CD4-positive, alpha-beta memory T cell (primary cell): ENCODE measurements at regions of chr17 and their contacts with region 1.

Region 1: DNA sequence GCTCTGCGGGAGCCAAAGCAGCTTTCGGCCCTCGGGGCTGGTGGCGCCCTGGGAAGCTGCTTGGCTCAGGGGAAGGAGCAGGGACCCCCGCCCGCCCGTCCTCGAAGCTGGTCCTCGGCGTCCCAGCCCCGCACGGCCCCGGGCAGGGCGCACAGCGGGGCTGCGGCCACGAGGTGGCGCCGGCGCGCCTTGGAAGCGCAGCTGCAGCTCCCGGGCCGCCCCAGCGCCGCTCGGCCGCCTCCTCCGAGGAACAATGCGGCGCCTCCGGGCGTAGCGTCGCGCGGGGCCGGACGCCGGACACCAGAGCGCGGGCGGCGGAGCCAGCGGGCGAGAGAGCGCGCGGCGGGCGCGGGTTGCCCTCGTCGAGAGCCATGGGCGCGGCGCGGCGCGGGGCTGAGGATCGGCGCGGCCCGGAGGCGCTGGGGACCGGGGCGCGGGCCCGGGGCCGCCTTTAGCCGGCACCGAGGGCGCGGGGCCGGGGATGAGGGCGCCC is at the start of gene MGAT5B:
- DNase-seq: peak; percentile 52 to 83 (median 74)
- H3K4me3 ChIP-seq: peak within 1 kb of the TSS in 1 of 2 donors; percentile 1
- H3K4me3 Mint-ChIP-seq: peak within 1 kb of the TSS; percentile 53 to 85 (median 74)
- H3K27ac ChIP-seq: no peak within 1 kb of the TSS
- H3K27ac Mint-ChIP-seq: peak within 1 kb of the TSS in 2 of 7 donors; percentile 13 to 87
- H3K4me1 ChIP-seq: peaks cover 11% of the 10 kb centered on the region
- H3K4me1 Mint-ChIP-seq: peaks cover 0 to 12% (median 6%) of the 10 kb centered on the region in 4 donors
- H3K27me3 ChIP-seq: peaks cover 5% of the 10 kb centered on the region
- H3K27me3 Mint-ChIP-seq: peaks cover 6 to 23% of the 10 kb centered on the region in 2 donors
- total RNA-seq, gene MGAT5B: 1.8 to 2.4 TPM

Region 2: GRCh38 chr17:76843703-76844484 is 24.3 kb before region 1 on chr17:
- CTCF ChIA-PET with region 1: no interaction called
- POLR2A ChIA-PET with region 1: no interaction called
- intact Hi-C with region 1: no loop called
- DNase-seq: no peak
- H3K4me3 ChIP-seq: no peak overlapping the region
- H3K4me3 Mint-ChIP-seq: no peak overlapping the region
- H3K27ac ChIP-seq: no peak overlapping the region
- H3K27ac Mint-ChIP-seq: no peak overlapping the region
- H3K4me1 ChIP-seq: peaks cover 26% of the 10 kb centered on the region
- H3K4me1 Mint-ChIP-seq: peaks cover 10 to 19% (median 13%) of the 10 kb centered on the region in 4 donors
- H3K27me3 ChIP-seq: peaks cover 27% of the 10 kb centered on the region
- H3K27me3 Mint-ChIP-seq: peaks cover 31 to 47% of the 10 kb centered on the region in 2 donors

Region 3: DNA sequence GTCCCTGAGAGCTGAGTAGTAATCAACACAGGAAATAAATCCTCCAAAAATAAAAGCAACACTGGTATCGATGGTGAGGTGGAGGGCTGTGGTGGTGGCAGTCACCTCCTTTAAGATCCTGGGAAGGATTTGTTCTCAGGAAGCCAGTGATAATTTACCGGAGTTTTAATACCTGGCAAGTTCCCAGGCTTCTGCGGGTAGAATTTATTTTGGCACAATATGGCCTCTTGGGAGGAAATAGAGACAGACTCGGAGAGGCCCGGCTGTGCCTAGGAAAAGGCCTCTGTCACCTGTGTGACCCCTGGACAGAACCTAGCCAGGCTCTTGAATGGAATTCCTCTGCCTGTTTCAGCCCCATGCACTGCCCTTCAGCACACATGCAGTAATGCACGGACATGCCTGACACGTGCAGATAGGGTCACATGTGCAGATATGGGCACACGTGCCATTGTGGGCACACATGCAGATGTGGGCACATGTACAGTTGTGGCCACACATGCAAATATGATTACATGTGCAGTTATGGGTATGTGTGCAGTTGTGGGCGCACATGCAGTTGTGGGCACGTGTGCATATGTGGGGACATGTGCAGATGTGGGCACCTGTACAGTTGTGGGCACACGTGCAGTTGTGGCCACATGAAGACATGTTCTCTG is 33.4 kb after region 1 on chr17:
- CTCF ChIA-PET with region 1: no interaction called
- POLR2A ChIA-PET with region 1: no interaction called
- intact Hi-C with region 1: no loop called
- DNase-seq: no peak
- H3K4me3 ChIP-seq: no peak overlapping the region
- H3K4me3 Mint-ChIP-seq: no peak overlapping the region
- H3K27ac ChIP-seq: no peak overlapping the region
- H3K27ac Mint-ChIP-seq: no peak overlapping the region
- H3K4me1 ChIP-seq: no peaks in the 10 kb centered on the region
- H3K4me1 Mint-ChIP-seq: no peaks in the 10 kb centered on the region
- H3K27me3 ChIP-seq: no peaks in the 10 kb centered on the region
- H3K27me3 Mint-ChIP-seq: no peaks in the 10 kb centered on the region

Region 4: DNA sequence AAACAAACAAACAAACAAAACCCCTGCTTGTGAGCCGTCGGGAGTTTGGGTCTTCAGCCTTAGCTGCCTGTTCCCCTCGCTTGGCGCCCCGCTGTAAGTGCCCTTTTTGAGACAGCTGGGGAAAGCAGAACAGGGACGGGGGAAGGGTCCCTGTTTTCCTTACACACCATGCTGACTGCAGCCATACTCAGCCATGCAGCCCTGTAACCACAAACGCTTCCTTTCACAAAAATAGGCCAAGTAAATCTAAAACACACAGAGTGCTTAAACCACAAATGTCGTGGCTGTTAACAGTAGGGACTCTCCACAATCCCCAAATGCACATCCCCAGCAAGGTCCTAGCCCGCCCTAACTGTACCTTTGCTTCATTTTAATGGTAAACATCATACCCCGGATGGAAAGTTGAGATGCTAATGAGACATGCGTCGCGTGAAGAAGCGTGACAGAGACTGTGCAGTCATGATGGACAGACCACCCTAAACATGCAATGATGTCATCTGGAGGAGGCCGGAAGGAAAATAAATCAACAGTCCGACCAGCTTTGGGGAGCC is 129.8 kb after region 1 on chr17:
- CTCF ChIA-PET with region 1: no interaction called
- POLR2A ChIA-PET with region 1: no interaction called
- intact Hi-C with region 1: loop called (anchors 1 kb)
- DNase-seq: peak; percentile 82 to 90 (median 86)
- H3K4me3 ChIP-seq: peak overlapping the region; percentile 5 to 22
- H3K4me3 Mint-ChIP-seq: peak overlapping the region; percentile 52 to 80 (median 68)
- H3K27ac ChIP-seq: peak overlapping the region; percentile 79
- H3K27ac Mint-ChIP-seq: peak overlapping the region; percentile 87 to 96 (median 93)
- H3K4me1 ChIP-seq: peaks cover 55% of the 10 kb centered on the region
- H3K4me1 Mint-ChIP-seq: peaks cover 33 to 70% (median 50%) of the 10 kb centered on the region in 4 donors
- H3K27me3 ChIP-seq: no peaks in the 10 kb centered on the region
- H3K27me3 Mint-ChIP-seq: no peaks in the 10 kb centered on the region

Region 5: DNA sequence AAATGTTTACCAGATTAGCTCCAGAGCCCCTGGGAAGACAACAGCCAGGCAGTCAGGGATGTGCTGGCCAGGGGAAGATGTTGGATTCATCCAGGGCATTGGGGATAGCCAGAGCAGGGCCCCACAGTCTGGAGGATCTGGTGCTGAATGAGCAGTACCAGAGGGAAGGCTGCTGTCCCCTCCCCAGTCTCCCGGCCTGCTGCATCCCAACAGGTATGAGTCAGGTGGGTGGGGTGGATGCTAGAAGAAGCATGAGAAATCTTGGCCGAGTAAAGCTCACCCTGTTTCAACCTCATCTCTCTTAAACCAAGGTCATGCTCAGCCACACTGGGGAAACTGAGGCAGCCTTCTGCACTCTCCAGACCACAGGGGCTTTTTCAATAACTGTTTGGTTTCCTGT is 200.7 kb after region 1 on chr17:
- CTCF ChIA-PET with region 1: interaction called, 59 read pairs
- POLR2A ChIA-PET with region 1: interaction called, 4 read pairs
- intact Hi-C with region 1: loop called (anchors 1 kb)
- DNase-seq: no peak
- H3K4me3 ChIP-seq: no peak overlapping the region
- H3K4me3 Mint-ChIP-seq: no peak overlapping the region
- H3K27ac ChIP-seq: no peak overlapping the region
- H3K27ac Mint-ChIP-seq: no peak overlapping the region
- H3K4me1 ChIP-seq: no peaks in the 10 kb centered on the region
- H3K4me1 Mint-ChIP-seq: peaks cover 1 to 5% (median 3%) of the 10 kb centered on the region in 4 donors
- H3K27me3 ChIP-seq: no peaks in the 10 kb centered on the region
- H3K27me3 Mint-ChIP-seq: peaks cover 24 to 32% of the 10 kb centered on the region in 2 donors

Region 6: GRCh38 chr17:77247048-77247541 is 378.9 kb after region 1 on chr17:
- CTCF ChIA-PET with region 1: no interaction called
- POLR2A ChIA-PET with region 1: no interaction called
- intact Hi-C with region 1: loop called (anchors 5 kb)
- DNase-seq: peak; percentile 77 to 84 (median 80)
- H3K4me3 ChIP-seq: peak overlapping the region in 1 of 2 donors; percentile 43
- H3K4me3 Mint-ChIP-seq: peak overlapping the region; percentile 55 to 82 (median 65)
- H3K27ac ChIP-seq: no peak overlapping the region
- H3K27ac Mint-ChIP-seq: peak overlapping the region in 1 of 7 donors; percentile 88
- H3K4me1 ChIP-seq: peaks cover 14% of the 10 kb centered on the region
- H3K4me1 Mint-ChIP-seq: peaks cover 5 to 12% (median 6%) of the 10 kb centered on the region in 4 donors
- H3K27me3 ChIP-seq: no peaks in the 10 kb centered on the region
- H3K27me3 Mint-ChIP-seq: peaks cover 2 to 18% of the 10 kb centered on the region in 2 donors